Activated CD4-positive, alpha-beta T cell treated with anti-CD3 and anti-CD28 coated beads, Interleukin-2, amount 10 ng/mL, durations not matched to agents 24 days and 14 days (primary cell): ENCODE measurements at regions of chr5 and their contacts with region 1.

Region 1: DNA sequence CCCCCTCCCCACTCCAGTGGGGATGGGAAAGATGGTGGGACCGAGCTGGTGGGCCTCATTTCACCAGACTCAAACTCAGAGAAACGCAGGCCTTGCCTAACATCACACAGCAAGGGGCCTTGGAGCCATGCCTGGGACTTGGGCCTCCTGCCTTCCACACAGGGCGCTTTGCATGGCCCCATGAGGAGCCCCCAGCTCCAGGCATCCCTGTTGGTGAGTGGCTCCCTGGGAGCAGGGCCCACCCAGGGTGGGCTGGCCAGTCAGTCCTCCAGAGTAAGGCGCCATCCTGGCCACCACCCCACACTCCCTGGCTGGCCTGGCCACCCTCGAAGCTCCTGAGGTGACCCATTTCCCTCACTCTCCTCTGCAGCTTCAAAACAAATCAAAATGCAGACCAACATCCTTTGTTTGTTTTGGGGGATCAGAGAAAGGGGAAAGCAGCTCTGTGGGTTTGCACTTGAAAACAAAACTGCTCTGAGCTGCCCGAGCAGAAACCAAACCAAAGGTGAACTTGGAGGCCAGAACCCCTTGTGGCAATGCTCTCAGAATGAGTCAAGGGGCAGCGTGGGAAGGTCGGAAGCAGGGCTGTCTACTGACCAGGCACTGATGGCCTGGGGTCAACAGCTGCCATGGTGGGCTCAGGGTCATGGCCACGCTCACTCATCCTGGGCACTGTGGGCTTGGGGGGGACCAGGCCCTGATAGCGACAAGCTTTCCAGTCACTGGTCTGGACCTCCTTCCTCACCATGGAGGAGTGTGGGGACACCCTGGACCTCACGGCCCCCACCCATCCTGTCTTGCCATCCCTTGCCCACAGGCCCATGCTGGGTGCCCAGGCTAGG is 37.0 kb upstream of the VDAC1 start:
- DNase-seq: peak; percentile 71
- H3K4me3 Mint-ChIP-seq: no peak overlapping the region
- H3K27ac Mint-ChIP-seq: peak overlapping the region; percentile 15
- H3K4me1 Mint-ChIP-seq: peaks cover 34% of the 10 kb centered on the region
- H3K27me3 Mint-ChIP-seq: peaks cover 3% of the 10 kb centered on the region

Region 2: GRCh38 chr5:134053840-134054338 is 12.1 kb after region 1 on chr5:
- intact Hi-C with region 1: loop called (anchors 1 kb)
- DNase-seq: no peak
- H3K4me3 Mint-ChIP-seq: peak overlapping the region; percentile 40
- H3K27ac Mint-ChIP-seq: peak overlapping the region; percentile 70
- H3K4me1 Mint-ChIP-seq: peaks cover 24% of the 10 kb centered on the region
- H3K27me3 Mint-ChIP-seq: no peaks in the 10 kb centered on the region

Region 3: DNA sequence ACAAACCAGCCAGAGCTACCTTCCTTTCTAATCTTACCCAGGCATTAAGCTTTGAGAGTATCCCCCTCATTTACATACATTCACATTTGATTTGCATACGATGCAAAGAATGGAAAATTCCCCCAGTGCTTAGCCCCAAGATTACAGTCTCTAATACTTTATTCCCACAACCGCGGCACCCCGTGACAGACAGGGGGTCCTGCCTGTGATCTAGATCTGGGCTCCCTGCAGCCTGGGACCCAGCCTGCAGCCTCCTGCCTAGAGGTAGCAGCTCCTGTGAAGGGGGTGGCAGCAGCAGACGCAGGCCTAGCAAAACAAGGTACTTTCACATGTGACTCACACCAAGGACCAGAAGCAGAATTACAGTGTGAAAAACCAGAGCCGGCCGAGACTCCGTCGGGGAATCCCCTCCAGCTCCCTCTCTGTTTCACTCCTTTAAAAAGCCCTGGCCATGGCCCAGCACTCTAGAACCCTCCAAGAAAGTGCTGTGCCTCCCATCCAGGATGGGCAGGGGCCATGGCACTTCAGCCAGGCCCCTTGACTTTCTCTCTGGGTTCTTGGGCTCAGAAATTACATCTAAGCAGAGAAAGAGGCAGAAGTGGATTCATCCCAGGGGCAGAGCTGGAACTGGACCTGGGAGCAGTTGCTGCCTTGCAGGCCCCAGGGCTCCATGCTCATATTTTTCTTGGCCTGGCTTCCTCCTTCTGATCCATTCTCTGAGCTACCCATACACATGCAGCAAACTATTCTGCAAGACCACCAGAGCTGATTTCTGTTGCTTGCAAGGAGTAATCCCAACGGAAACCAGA is 58.7 kb after region 1 on chr5:
- intact Hi-C with region 1: loop called (anchors 1 kb)
- DNase-seq: peak; percentile 94
- H3K4me3 Mint-ChIP-seq: peak overlapping the region; percentile 59
- H3K27ac Mint-ChIP-seq: peak overlapping the region; percentile 90
- H3K4me1 Mint-ChIP-seq: peaks cover 58% of the 10 kb centered on the region
- H3K27me3 Mint-ChIP-seq: peaks cover 3% of the 10 kb centered on the region

Region 4: GRCh38 chr5:134145779-134146581 is 104.2 kb after region 1 on chr5:
- intact Hi-C with region 1: loop called (anchors 1 kb)
- DNase-seq: peak; percentile 95
- H3K4me3 Mint-ChIP-seq: no peak overlapping the region
- H3K27ac Mint-ChIP-seq: peak overlapping the region; percentile 36
- H3K4me1 Mint-ChIP-seq: peaks cover 33% of the 10 kb centered on the region
- H3K27me3 Mint-ChIP-seq: no peaks in the 10 kb centered on the region